HAP-1 (cell line): ENCODE measurements at regions of chr10 and their contacts with region 1.

Region 1: DNA sequence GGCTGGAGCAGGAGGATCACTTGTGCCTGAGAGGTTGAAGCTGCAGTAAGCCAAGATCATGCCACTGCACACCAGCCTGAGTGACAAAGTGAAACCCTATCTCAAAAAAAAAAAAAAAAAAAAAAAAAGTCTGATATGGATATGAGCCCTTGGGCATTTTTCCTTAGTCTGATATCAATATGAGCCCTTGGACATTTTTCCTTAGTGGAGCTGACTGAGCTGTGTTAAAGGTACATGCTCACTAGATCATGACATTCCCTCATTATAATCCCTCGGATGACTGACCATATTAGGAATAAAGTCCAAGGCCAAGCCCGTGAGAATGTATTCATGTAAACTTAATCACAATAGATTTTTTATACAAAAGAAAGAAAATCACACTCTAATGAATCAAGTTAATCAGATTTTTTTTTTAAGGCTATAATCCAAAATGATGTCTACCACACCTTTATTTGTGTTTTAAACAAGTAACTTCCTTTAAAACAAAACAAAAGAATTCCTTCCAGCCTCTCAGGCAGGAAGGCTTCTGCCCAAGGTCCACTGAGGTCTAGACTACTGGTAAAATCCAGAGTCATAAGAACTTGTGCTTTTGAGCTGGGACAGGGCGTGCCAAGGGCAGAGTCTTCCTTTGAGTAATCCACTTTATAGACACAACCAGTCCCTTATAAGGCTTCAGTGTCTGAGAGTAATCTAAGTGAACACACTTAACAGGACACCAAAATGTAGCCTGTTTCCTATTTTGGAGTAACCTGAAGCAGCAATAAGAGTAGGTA is 5.5 kb downstream of the PPA1 start:
- DNase-seq: peak; percentile 51 to 59
- H3K4me3 ChIP-seq: no peak overlapping the region
- H3K4me1 ChIP-seq: peaks cover 33% of the 10 kb centered on the region
- H3K27me3 ChIP-seq: no peaks in the 10 kb centered on the region

Region 2: DNA sequence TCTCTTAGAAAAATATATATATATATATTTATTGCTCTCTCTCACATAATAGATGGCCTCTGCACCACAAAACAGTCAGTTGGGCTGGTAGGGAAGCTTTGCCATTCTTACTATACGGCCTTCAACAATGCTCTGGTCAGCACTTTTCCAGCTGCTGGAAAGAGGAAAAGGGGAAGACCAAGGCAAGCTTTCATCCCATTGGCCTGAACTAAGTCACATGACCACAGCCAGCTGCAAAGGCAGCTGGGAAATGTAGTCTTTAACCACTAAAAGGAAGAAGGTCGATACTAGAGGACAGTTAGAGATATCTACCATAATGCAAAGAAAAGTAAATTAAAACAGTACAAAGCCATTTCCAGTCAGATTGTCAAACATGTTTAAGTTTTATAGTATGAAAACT is 233.5 kb before region 1 on chr10:
- in situ Hi-C with region 1: no loop called
- DNase-seq: peak; percentile 26 to 41
- H3K4me3 ChIP-seq: no peak overlapping the region
- H3K4me1 ChIP-seq: no peaks in the 10 kb centered on the region
- H3K27me3 ChIP-seq: peaks cover 12% of the 10 kb centered on the region

Region 3: GRCh38 chr10:70191161-70191971 is 36.4 kb before region 1 on chr10:
- in situ Hi-C with region 1: no loop called
- DNase-seq: peak in 1 of 2 experiments; percentile 9
- H3K4me3 ChIP-seq: no peak overlapping the region
- H3K4me1 ChIP-seq: peaks cover 9% of the 10 kb centered on the region
- H3K27me3 ChIP-seq: no peaks in the 10 kb centered on the region

Region 4: DNA sequence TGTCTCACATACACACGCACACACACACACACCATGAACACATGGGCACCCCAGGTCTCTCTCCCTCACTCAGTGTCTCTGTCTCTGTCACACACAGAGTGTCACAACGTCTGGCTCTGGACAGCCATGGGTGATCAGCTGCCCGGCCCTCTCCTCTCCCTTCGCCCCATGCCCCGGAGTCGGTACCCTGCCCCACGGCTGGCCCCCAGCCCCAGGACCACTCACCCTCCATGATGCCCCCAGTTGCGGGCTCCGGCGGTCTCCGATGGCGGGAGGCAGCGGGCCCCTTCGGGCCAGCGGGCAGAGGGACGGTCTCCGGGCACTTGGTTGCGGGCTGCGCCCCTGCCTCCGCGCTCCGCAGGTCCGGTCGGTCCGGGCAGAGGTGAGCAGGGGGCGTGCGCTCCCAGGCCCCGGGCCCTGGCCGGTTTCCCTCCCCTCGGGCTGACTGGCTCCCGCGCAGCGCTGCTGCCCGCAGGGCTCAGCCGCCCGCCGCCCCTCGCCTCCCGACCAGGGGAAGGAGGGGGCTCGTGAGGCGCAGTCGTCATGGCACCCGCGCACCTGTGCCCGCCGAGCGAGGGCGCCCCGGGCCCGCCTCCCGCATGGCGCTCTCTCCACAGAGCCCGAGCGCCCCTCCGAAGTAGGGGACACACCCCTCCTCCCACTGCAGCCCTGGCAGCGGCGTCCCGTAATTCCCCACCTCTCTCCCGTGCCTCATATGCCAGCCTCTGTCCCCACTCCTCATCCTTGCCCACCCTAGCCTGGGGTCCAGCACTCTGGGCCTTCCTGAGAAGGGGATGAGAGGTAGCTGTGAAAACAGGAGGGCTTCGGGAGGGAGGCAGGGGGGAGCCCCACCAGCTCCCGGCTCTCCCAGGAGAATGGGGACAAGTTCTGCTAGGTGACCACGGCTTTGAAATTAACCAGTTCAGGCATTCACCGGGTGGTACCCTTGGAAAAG is 56.0 kb after region 1 on chr10 and contains the start of gene NPFFR1:
- in situ Hi-C with region 1: no loop called
- DNase-seq: no peak
- H3K4me3 ChIP-seq: no peak within 1 kb of the TSS
- H3K4me1 ChIP-seq: peaks cover 7% of the 10 kb centered on the region; the same call in 1 of the 2 replicates
- H3K27me3 ChIP-seq: peaks cover 64% of the 10 kb centered on the region

Region 5: GRCh38 chr10:70363971-70364771 is 136.4 kb after region 1 on chr10:
- in situ Hi-C with region 1: loop called (anchors 5 kb)
- DNase-seq: peak; percentile 61 to 91
- H3K4me3 ChIP-seq: no peak overlapping the region
- H3K4me1 ChIP-seq: no peaks in the 10 kb centered on the region
- H3K27me3 ChIP-seq: no peaks in the 10 kb centered on the region